ENCODE measurements at regions of chr14 and their contacts with region 1.

Region 1: DNA sequence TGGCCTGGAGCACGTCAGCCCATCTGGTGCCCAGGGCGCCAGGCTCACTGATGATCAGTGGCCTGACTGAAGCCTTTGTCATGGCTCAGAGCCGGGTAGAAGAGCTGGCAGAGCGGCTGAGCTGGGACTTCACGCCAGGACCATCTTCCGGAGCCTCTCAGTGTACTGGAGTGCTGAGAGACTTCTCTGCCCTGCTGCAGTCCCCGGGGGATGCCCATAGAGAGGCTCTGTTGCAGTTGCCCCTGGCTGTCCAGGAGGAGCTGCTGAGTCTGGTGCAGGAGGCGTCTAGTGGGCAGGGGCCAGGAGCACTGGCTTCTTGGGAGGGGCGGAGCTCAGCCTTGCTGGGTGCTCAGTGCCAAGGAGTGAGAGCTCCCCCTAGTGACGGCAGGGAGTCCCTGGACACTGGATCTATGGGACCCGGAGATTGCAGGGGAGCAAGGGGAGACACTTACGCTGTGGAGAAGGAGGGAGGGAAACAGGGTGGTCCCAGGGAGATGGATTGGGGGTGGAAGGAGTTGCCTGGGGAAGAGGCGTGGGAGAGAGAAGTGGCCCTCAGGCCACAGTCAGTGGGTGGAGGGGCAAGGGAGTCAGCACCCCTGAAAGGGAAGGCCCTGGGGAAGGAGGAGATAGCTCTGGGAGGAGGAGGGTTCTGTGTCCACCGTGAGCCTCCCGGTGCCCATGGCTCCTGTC is 2.0 kb downstream of the KHNYN start:
- DNase-seq: peak; percentile 85
- H3K4me3 ChIP-seq: peak overlapping the region; percentile 82
- H3K27ac ChIP-seq: no peak overlapping the region
- H3K27me3 ChIP-seq: no peaks in the 10 kb centered on the region
- CTCF ChIP-seq: peak; percentile 97

Region 2: GRCh38 chr14:23665375-23666192 is 766.1 kb before region 1 on chr14:
- CTCF ChIA-PET with region 1: no interaction called
- POLR2A ChIA-PET with region 1: no interaction called
- DNase-seq: peak; percentile 2
- H3K4me3 ChIP-seq: no peak overlapping the region
- H3K27ac ChIP-seq: no peak overlapping the region
- H3K27me3 ChIP-seq: peaks cover 10% of the 10 kb centered on the region
- CTCF ChIP-seq: peak; percentile 65

Region 3: GRCh38 chr14:24310646-24311604 is 120.8 kb before region 1 on chr14 and contains the start of gene LTB4R:
- CTCF ChIA-PET with region 1: interaction called, 51 read pairs
- POLR2A ChIA-PET with region 1: interaction called, 5 read pairs
- DNase-seq: no peak
- H3K4me3 ChIP-seq: peak within 1 kb of the TSS; percentile 20; the same call in 1 of the 2 replicates
- H3K27ac ChIP-seq: no peak within 1 kb of the TSS
- H3K27me3 ChIP-seq: peaks cover 2% of the 10 kb centered on the region
- CTCF ChIP-seq: peak; percentile 12; the same call in 1 of the 2 replicates
- polyA plus RNA-seq, gene LTB4R: 0.98 and 1.2 TPM in 2 replicates

Region 4: DNA sequence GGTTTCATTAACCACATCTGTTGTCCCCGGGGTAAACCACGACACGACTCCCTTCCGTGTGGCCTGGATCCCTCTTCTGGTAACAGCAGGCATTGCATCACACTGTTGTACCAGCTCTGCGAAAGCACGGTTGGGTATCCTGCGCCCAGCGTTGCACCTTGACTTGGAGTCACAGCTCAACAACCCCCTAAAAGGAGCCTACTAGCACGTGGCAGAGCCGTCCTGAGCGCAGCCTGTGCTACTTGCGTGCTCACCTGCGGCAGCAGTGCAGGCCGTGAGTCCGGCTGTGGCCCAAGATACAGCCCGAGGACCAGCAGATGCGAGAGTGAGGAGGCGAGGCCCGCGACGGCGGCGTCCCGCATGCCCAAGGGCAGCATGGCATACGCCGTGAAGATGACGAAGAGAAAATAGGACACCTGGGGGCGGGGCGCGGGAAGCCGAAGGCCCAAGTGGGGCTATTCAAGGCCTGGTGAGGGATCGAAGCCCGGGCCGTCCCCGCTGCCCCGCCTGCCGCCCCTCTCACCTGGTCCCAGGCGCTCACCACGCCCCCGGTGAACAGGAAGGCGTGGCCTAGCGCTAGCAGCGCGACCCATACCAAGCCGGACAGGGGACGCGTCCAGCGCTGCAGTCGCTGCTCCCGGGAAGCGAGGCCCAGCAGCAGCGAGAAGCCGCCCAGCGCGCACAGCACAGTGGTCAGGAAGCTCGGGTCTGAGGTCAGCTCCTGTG is 99.3 kb before region 1 on chr14:
- CTCF ChIA-PET with region 1: interaction called, 712 read pairs
- POLR2A ChIA-PET with region 1: interaction called, 17 read pairs
- DNase-seq: no peak
- H3K4me3 ChIP-seq: peak overlapping the region; percentile 40
- H3K27ac ChIP-seq: no peak overlapping the region
- H3K27me3 ChIP-seq: peaks cover 49% of the 10 kb centered on the region
- CTCF ChIP-seq: peak; percentile 76

Region 5: DNA sequence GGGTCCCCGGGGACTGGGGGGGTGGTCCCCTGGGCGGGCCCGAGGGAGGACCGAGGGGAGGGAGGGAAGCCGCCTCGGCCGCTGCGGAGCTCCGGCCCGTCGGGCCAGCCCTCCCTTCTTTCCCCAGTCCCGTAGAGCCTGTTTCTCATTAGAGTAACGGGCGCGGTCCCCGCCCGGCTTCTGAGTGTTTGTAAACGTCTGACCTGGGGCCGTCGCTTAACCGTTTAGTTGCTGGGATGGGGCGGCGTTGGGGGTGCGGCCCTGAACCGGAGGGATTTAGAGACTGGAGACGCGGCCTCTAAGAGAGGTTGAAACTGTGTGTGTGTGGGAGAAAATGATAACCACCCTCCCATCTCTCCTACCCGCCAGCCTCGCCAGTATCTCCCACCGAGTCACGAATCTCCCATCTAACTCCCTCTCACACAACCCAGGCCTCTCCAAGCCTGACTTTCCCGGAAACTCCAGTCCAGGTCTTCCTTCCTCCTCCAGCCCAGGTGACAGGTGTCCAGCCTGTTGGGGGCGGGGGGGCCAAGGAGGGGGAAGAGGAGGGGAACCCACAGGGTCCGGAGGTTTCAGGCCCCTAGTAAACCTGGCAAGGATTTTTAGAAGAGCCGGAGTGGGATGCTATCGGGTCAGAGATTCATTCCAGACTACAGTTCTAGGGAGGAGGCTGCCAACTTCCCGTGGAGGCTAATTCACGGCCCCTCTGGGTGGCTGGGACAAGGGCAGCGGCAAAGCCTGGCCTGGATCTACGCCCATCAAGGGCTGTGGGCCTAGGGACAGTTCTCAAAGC is 64.8 kb before region 1 on chr14:
- CTCF ChIA-PET with region 1: interaction called, 160 read pairs
- POLR2A ChIA-PET with region 1: interaction called, 42 read pairs
- DNase-seq: peak; percentile 83
- H3K4me3 ChIP-seq: peak overlapping the region; percentile 46
- H3K27ac ChIP-seq: peak overlapping the region; percentile 96
- H3K27me3 ChIP-seq: no peaks in the 10 kb centered on the region
- CTCF ChIP-seq: no peak

Region 6: DNA sequence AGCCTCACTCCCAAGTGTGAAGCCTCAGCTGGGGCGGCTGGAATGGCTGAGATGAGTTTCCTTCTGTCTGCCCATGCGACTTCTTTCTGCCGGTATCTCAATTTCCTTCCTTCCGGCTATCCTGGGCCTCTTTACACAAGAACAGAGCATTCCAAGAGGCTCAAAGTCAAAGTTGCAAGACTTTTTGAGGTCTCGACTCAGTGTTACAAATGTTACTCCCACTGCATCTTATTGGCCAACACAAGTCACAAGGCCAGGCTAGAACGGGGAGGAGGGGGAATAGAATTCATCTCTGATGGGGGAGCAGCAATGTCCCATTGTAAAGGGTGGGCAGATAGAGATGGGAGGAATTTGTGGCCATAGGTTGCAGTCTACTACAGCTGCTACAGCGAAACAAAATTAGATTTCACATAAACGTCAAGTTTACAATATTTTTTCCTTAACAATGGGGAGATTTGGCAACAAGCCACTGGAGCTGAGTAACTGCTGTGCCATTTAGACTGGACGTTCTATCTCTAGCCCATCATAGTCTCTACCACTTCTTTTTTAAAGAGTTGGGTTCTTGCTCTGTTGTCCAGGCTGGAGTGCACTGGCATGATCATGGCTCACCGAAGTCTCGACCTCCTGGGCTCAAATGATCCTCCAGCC is 42.4 kb before region 1 on chr14:
- CTCF ChIA-PET with region 1: interaction called, 14 read pairs
- POLR2A ChIA-PET with region 1: interaction called, 3 read pairs
- DNase-seq: no peak
- H3K4me3 ChIP-seq: no peak overlapping the region
- H3K27ac ChIP-seq: peak overlapping the region; percentile 21
- H3K27me3 ChIP-seq: peaks cover 5% of the 10 kb centered on the region
- CTCF ChIP-seq: no peak

Region 7: DNA sequence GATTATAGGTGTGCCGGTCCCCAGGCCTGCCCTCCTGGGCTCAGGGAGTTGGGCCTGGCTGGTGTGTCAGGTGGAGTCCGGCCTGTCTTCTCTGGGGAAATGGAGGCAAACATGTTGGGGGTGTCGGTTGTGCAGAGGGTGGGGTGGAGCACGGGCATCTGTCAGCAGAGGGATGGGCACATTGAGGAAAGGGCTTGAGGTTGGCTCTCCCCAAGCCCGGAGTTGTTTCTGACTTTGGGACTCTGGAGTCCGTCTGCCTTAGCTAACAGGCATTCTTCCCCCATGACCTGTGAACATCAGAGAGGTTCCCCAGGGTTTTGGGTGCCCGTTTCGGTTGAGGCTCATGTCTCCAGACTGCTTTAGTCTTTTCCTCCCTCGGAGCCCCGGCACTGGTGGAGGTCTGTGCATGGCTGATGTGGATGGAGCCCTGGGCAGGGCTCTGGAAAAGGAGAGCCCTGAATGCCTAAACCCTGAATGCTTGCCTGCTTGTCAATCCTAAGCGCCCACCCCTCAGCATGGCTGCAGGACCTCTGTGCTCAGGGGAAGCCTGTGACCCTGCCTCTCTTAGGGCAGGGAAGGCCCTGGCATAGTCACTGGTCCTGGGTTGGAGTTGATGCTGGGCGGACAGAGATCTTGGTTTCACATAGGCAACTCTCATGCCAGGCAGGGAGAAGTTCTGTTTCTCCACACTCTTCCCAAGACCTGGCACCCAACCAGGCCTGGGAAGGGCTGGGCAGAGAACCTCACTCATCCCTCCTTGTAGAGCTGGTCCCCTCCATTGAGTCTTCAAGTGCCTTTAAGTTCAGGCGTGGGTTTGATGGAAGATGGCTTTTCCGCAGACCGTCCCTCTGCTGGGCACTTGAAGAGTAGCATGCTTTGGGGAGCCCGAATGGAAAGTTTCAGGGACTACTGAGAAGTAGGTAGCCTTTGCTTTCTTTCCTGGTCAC is 20.0 kb before region 1 on chr14:
- CTCF ChIA-PET with region 1: interaction called, 41 read pairs
- POLR2A ChIA-PET with region 1: interaction called, 4 read pairs
- DNase-seq: no peak
- H3K4me3 ChIP-seq: no peak overlapping the region
- H3K27ac ChIP-seq: no peak overlapping the region
- H3K27me3 ChIP-seq: peaks cover 6% of the 10 kb centered on the region
- CTCF ChIP-seq: peak; percentile 77

Region 8: GRCh38 chr14:24442273-24443052 is 10.7 kb after region 1 on chr14 and contains the start of gene SDR39U1:
- CTCF ChIA-PET with region 1: interaction called, 66 read pairs
- POLR2A ChIA-PET with region 1: interaction called, 9 read pairs
- DNase-seq: peak; percentile 98
- H3K4me3 ChIP-seq: peak within 1 kb of the TSS; percentile 94
- H3K27ac ChIP-seq: peak within 1 kb of the TSS; percentile 100
- H3K27me3 ChIP-seq: no peaks in the 10 kb centered on the region
- CTCF ChIP-seq: no peak
- polyA plus RNA-seq, gene SDR39U1: 22.9 and 24.9 TPM in 2 replicates

Region 9: DNA sequence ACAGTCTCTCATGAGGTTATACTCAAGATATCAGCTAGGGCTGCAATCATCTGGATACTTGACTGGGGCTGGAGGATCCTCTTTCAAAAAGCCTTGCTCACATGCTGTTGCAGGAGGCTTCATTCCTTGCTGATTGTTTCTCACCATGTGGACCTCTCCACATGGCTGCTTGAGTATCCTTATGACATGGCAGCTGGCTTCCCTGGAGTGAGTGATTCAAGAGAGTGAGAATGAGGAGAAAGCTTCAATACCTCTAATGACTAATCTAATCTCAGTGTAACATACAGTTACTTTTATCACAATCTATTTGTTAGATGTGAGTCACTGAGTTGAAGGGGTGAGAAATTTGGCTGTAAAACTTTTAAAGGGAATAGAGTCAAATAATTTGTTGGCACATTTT is 25.3 kb after region 1 on chr14:
- CTCF ChIA-PET with region 1: no interaction called
- POLR2A ChIA-PET with region 1: no interaction called
- DNase-seq: no peak
- H3K4me3 ChIP-seq: no peak overlapping the region
- H3K27ac ChIP-seq: no peak overlapping the region
- H3K27me3 ChIP-seq: no peaks in the 10 kb centered on the region
- CTCF ChIP-seq: no peak

Region 10: DNA sequence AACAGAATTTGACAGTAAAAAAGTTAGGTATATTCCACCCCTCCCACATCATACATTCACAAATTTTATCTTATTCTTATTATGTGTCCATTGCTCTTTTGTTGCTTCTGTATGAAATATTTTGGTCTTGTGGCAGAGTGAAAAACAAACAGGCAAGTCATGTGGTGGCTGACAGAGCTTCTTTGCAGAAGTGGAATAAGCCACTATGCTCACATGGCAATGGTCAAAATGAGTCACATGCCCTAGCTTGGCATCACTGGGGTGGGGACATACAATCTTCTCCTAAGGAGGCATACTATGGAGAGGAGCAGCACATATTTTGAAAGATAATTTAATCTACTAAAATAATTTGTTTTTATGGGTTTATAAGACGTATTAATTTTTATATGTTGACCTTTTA is 104.0 kb after region 1 on chr14:
- CTCF ChIA-PET with region 1: no interaction called
- POLR2A ChIA-PET with region 1: no interaction called
- DNase-seq: no peak
- H3K4me3 ChIP-seq: no peak overlapping the region
- H3K27ac ChIP-seq: no peak overlapping the region
- H3K27me3 ChIP-seq: no peaks in the 10 kb centered on the region
- CTCF ChIP-seq: no peak

Region 11: GRCh38 chr14:24639905-24640304 is 208.2 kb after region 1 on chr14:
- CTCF ChIA-PET with region 1: no interaction called
- POLR2A ChIA-PET with region 1: no interaction called
- DNase-seq: no peak
- H3K4me3 ChIP-seq: no peak overlapping the region
- H3K27ac ChIP-seq: no peak overlapping the region
- H3K27me3 ChIP-seq: no peaks in the 10 kb centered on the region
- CTCF ChIP-seq: no peak

Measured in AG04450 (cell line).